ENCODE measurements at regions of chr19 and their contacts with region 1.

Region 1: GRCh38 chr19:43519436-43520088 is 7.4 kb downstream of the ETHE1 start:
- DNase-seq: peak; percentile 65
- H3K4me3 Mint-ChIP-seq: no peak overlapping the region
- H3K27ac Mint-ChIP-seq: peak overlapping the region; percentile 17
- H3K4me1 Mint-ChIP-seq: peaks cover 7% of the 10 kb centered on the region
- H3K27me3 Mint-ChIP-seq: no peaks in the 10 kb centered on the region

Region 2: DNA sequence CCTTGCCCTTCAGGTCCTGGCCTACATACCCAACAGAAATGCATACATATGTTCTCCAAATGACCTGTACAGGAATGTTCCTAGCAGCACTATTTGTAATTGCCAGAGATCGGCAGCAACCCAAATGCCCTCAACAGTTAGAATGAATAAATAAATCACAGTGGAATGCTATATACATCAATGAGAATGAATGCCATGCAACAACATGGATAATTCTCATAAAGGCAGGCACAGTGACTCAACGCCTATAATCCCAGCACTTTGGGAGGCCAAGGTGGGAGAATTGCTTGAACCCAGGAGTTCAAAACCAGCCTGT is 86.2 kb before region 1 on chr19:
- intact Hi-C with region 1: loop called (anchors 2 kb)
- DNase-seq: no peak
- H3K4me3 Mint-ChIP-seq: no peak overlapping the region
- H3K27ac Mint-ChIP-seq: no peak overlapping the region
- H3K4me1 Mint-ChIP-seq: peaks cover 24% of the 10 kb centered on the region
- H3K27me3 Mint-ChIP-seq: no peaks in the 10 kb centered on the region

Region 3: GRCh38 chr19:43463381-43464136 is 56.0 kb before region 1 on chr19:
- intact Hi-C with region 1: no loop called
- DNase-seq: peak; percentile 96
- H3K4me3 Mint-ChIP-seq: peak overlapping the region; percentile 89
- H3K27ac Mint-ChIP-seq: peak overlapping the region; percentile 96
- H3K4me1 Mint-ChIP-seq: peaks cover 29% of the 10 kb centered on the region
- H3K27me3 Mint-ChIP-seq: no peaks in the 10 kb centered on the region

Region 4: DNA sequence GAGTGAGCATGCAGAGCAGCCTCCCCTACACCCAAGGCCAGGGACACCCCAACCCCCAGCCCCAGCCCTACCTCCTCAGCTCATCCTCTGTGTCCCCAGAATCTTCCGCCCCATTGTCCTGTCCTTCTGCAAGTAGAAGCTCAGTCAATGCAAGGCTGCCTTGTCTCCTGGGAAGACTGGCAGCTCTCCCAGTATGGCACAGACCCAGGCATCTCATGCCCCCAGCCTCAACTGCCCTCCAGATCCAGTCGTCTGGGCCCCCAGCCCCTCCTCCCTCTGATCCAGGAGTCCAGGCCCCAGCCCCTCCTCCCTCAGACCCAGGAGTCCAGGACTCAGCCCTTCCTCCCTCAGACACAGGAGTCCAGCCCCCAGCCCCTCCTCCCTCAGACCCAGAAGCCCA is 26.4 kb after region 1 on chr19:
- intact Hi-C with region 1: no loop called
- DNase-seq: no peak
- H3K4me3 Mint-ChIP-seq: no peak overlapping the region
- H3K27ac Mint-ChIP-seq: no peak overlapping the region
- H3K4me1 Mint-ChIP-seq: no peaks in the 10 kb centered on the region
- H3K27me3 Mint-ChIP-seq: no peaks in the 10 kb centered on the region